ENCODE measurements at regions of chr4 and their contacts with region 1.

Region 1: DNA sequence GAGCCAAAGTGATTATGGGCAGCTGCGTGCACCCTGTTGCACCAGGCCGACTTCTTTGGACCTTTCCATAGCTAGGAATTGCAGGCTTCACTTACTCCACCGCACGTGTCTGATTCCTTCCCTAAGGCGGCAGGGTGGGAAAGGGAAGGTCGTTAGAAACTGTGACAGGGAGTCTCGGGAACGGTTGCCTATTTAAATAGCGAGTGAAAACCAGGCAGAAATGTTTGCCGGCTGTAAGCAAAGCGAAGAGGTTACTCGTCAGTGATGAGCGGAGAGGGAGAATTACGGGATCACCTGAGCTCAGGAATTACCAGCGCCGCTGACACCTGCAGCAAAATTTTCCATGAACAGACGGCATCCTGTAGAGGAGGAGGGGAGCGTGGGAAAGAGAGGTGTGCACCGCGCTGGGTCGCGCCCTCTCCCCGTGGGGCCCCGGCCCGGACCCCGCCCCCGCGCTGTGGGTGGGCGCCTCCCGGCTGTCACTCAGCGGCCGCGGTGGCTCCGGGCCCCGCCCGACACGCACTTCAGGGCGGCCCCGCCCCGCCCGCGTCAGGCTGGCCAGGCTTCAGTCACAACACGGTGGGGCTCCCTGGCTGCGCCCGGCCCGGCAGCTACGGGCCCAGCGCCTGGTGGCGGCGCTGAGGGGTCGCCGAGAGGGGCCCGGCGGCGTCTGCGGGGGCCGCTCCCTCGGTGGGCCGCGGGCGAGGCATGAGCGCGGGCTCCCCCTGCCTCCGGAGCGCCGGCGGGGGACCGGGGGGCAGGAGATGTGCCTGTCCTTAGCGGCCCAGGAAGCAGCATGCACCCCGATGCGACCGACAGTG is at the start of gene SNX25:
- DNase-seq: peak; percentile 97
- H3K4me3 Mint-ChIP-seq: peak within 1 kb of the TSS; percentile 94
- H3K27ac Mint-ChIP-seq: peak within 1 kb of the TSS; percentile 83
- H3K4me1 Mint-ChIP-seq: peaks cover 48% of the 10 kb centered on the region
- H3K27me3 Mint-ChIP-seq: peaks cover 3% of the 10 kb centered on the region
- total RNA-seq, gene SNX25: 27.0 and 27.3 TPM in 2 replicates

Region 2: DNA sequence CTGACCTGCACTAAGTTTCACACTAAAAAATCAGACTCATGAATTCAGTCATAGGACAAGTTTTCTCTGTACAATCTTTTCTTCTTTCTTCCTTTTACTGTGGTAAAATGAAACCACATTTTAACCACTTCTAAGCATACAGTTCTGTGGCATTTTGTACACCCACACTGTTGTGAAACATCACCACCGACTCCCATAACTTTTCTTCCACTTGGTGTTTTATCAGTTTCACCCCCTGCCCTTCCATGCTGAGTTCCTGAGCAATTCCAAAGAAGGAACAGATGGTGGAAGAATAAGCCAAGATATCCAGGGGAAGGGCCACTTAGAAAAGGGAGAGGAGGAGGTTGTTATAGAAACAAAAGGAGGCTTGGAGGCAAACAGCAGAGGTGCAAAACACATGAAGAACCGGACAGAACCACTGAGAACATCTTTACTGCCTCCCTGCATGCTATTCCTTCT is 43.6 kb before region 1 on chr4:
- intact Hi-C with region 1: loop called (anchors 2 kb)
- DNase-seq: peak; percentile 76
- H3K4me3 Mint-ChIP-seq: peak overlapping the region; percentile 20
- H3K27ac Mint-ChIP-seq: peak overlapping the region; percentile 85
- H3K4me1 Mint-ChIP-seq: peaks cover 14% of the 10 kb centered on the region
- H3K27me3 Mint-ChIP-seq: peaks cover 18% of the 10 kb centered on the region

Region 3: DNA sequence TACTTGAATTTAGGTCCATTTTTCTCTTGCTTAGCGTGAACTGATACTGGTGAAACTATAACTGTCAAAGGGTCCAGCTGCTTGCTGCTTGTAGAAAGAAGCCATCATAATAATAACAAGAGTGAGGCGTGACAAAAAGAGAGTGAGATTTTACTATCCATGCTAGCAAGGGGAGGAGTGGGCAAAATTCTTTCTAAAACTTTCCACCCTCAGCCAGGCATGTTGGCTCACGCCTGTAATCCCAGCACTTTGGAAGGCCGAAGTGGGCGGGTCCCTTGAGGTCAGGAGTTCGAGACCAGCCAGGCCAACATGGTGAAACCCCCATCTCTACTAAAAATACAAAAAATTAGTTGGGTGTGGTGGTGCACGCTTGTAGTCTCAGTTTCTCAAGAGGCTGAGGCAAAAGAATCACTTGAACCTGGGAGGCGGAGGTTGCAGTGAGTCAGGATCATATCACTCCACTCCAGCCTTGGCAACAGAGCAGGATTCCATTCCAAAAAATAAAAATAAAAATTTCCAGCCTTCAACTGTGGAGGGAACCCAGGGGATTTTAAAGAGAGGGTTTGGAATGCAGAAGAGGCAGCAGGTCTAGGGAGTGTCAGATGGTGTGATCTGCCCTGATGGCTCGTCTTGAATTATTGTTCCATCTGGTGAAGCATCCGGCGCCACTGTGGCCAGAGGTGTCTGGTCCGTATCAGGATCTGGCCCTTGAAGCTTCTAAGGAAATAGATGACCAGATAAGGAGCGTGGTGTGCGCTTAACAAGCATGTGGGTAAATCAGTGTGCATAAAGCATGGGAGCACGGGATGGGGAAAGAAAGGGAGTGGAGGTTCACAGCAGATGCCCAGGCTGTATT is 134.7 kb after region 1 on chr4:
- intact Hi-C with region 1: loop called (anchors 1 kb)
- DNase-seq: no peak
- H3K4me3 Mint-ChIP-seq: peak overlapping the region; percentile 50
- H3K27ac Mint-ChIP-seq: peak overlapping the region; percentile 90
- H3K4me1 Mint-ChIP-seq: peaks cover 43% of the 10 kb centered on the region
- H3K27me3 Mint-ChIP-seq: no peaks in the 10 kb centered on the region

Region 4: DNA sequence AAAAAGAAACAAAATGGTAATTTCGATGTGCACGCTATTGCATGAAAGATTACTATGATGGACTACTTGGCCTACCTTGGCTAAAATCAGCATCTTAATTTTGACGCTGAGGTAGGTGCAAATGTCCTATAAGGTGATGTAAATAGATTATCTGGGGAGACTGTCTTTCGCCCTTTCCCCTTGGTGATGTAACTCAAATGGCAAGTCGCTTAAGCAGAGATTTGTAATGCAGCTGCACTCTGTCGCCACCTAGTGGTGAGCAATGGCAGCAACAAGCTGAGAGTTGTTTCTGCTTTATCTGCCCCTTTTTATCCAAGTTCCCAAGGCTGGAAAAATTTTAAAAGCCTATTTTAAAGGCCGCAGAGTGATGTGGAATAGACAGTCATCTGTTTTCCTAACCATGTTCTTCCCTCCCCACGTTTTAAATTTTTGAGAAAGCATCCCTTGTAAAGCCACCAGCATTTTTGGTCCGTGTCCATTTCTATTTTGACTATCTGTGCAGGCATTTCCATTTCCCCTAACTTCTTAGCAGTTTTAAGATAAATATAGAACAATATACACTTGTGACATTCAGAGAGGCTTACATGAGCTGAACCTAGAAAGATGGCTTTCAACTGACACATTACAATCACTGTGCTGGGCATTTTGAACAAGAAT is 388.4 kb after region 1 on chr4:
- intact Hi-C with region 1: loop called (anchors 10 kb)
- DNase-seq: peak; percentile 88
- H3K4me3 Mint-ChIP-seq: no peak overlapping the region
- H3K27ac Mint-ChIP-seq: no peak overlapping the region
- H3K4me1 Mint-ChIP-seq: no peaks in the 10 kb centered on the region
- H3K27me3 Mint-ChIP-seq: peaks cover 7% of the 10 kb centered on the region